HCT116 (cell line): ENCODE measurements at regions of chr11 and their contacts with region 1.

Region 1: DNA sequence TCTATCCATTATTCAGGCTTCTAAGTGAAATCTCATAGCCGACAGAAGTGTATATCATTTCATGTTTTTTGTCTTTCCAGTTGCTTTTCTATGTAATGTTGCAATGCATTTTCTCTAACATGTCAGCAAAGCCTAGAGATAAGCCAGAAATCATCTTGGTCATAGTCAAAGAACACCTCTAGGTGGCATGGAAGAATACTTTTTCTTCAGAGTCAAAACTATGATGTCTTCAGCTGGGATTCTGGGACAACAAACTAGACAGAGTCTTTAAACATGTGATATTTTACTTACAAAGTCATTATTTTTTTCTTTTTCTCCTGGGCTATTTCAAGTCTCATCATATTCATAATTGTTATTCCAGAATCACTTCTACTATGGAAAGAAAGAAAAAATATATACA is 4.4 kb downstream of the GAS2 start:
- DNase-seq: no peak
- ATAC-seq: peak; percentile 64; the same call in 1 of the 2 replicates
- H3K4me3 ChIP-seq: no peak overlapping the region
- H3K27ac ChIP-seq: no peak overlapping the region
- H3K4me1 ChIP-seq: no peaks in the 10 kb centered on the region
- H3K27me3 ChIP-seq: peaks cover 28% of the 10 kb centered on the region
- CTCF ChIP-seq: peak in 1 of 3 experiments; percentile 32; a peak in 1 of 6 replicates
- POLR2A ChIP-seq: no peak
- RAD21 ChIP-seq: peak; percentile 28; the same call in 1 of the 2 replicates

Region 2: GRCh38 chr11:22778642-22779041 is 107.8 kb after region 1 on chr11:
- CTCF ChIA-PET with region 1: no interaction called
- POLR2A ChIA-PET with region 1: no interaction called
- RAD21 ChIA-PET with region 1: no interaction called
- intact Hi-C with region 1: loop called (anchors 5 kb)
- DNase-seq: no peak
- ATAC-seq: no peak
- H3K4me3 ChIP-seq: no peak overlapping the region
- H3K27ac ChIP-seq: no peak overlapping the region
- H3K4me1 ChIP-seq: no peaks in the 10 kb centered on the region
- H3K27me3 ChIP-seq: peaks cover 18% of the 10 kb centered on the region
- CTCF ChIP-seq: peak in 1 of 3 experiments; percentile 8; a peak in 1 of 6 replicates
- POLR2A ChIP-seq: no peak
- RAD21 ChIP-seq: peak; percentile 16; the same call in 1 of the 2 replicates